PC-9 (cell line): ENCODE measurements at regions of chr13 and their contacts with region 1.

Region 1: DNA sequence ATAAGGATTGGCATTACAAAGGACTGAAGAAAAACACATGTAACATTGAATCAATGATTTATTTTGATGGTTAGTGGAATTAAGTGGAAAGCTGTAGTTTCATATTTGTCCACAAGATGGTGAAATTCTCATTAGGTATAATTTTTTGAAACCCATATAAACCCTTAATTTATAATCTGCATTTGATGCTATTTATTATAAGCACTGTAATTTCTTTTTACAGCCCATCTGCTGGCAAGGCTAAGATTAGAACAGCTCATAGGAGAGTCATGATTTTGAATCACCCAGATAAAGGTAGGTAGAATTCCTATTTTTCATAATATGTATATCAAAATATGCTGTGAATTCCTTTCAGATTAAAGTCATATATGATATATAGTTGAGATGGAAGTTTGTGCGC is 62.2 kb downstream of the DNAJC15 start:
- DNase-seq: no peak
- H3K4me3 ChIP-seq: no peak overlapping the region
- H3K27ac ChIP-seq: no peak overlapping the region
- H3K4me1 ChIP-seq: no peaks in the 10 kb centered on the region
- H3K27me3 ChIP-seq: no peaks in the 10 kb centered on the region
- CTCF ChIP-seq: peak; percentile 75

Region 2: GRCh38 chr13:42836930-42837690 is 248.4 kb before region 1 on chr13:
- CTCF ChIA-PET with region 1: no interaction called
- POLR2A ChIA-PET with region 1: no interaction called
- intact Hi-C with region 1: loop called (anchors 10 kb)
- DNase-seq: no peak
- H3K4me3 ChIP-seq: no peak overlapping the region
- H3K27ac ChIP-seq: no peak overlapping the region
- H3K4me1 ChIP-seq: peaks cover 15% of the 10 kb centered on the region
- H3K27me3 ChIP-seq: no peaks in the 10 kb centered on the region
- CTCF ChIP-seq: no peak

Region 3: DNA sequence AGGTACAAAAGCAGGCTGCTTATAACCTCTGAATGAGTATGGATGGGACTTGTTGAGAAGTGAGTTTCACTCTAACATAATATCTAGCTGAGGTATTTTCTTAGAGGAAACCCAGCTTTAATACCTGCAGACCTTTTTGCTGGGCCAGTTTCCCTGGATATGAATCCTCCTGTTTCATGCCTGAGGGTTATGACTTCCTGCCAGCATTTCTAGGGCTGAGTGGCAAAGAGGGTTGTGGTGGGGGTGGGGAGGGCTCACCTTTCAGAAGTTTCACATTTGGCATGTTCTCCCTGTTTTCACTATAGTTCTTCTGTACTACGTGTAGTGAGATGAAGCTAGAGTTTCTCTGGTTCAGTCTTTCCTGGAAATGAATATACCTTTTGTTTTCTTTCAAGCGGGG is 867.8 kb after region 1 on chr13:
- CTCF ChIA-PET with region 1: no interaction called
- POLR2A ChIA-PET with region 1: no interaction called
- intact Hi-C with region 1: no loop called
- DNase-seq: peak in 1 of 2 experiments; percentile 21
- H3K4me3 ChIP-seq: no peak overlapping the region
- H3K27ac ChIP-seq: no peak overlapping the region
- H3K4me1 ChIP-seq: peaks cover 9% of the 10 kb centered on the region
- H3K27me3 ChIP-seq: no peaks in the 10 kb centered on the region
- CTCF ChIP-seq: no peak